Common myeloid progenitor, CD34-positive (primary cell): ENCODE measurements at regions of chr11 and their contacts with region 1.

Region 1: GRCh38 chr11:3971756-3972404 is 116.4 kb downstream of the STIM1 start:
- DNase-seq: peak; percentile 34 to 70 (median 60)
- H3K4me3 ChIP-seq: no peak overlapping the region
- H3K27ac ChIP-seq: no peak overlapping the region
- H3K4me1 ChIP-seq: peaks cover 2 to 19% (median 10%) of the 10 kb centered on the region in 4 experiments
- H3K27me3 ChIP-seq: no peaks in the 10 kb centered on the region

Region 2: GRCh38 chr11:3929649-3930048 is 42.2 kb before region 1 on chr11:
- CTCF ChIA-PET with region 1: interaction called, 10 read pairs
- POLR2A ChIA-PET with region 1: no interaction called
- DNase-seq: no peak
- H3K4me3 ChIP-seq: no peak overlapping the region
- H3K27ac ChIP-seq: no peak overlapping the region
- H3K4me1 ChIP-seq: peaks cover 6 to 22% (median 10%) of the 10 kb centered on the region in 4 experiments
- H3K27me3 ChIP-seq: no peaks in the 10 kb centered on the region

Region 3: DNA sequence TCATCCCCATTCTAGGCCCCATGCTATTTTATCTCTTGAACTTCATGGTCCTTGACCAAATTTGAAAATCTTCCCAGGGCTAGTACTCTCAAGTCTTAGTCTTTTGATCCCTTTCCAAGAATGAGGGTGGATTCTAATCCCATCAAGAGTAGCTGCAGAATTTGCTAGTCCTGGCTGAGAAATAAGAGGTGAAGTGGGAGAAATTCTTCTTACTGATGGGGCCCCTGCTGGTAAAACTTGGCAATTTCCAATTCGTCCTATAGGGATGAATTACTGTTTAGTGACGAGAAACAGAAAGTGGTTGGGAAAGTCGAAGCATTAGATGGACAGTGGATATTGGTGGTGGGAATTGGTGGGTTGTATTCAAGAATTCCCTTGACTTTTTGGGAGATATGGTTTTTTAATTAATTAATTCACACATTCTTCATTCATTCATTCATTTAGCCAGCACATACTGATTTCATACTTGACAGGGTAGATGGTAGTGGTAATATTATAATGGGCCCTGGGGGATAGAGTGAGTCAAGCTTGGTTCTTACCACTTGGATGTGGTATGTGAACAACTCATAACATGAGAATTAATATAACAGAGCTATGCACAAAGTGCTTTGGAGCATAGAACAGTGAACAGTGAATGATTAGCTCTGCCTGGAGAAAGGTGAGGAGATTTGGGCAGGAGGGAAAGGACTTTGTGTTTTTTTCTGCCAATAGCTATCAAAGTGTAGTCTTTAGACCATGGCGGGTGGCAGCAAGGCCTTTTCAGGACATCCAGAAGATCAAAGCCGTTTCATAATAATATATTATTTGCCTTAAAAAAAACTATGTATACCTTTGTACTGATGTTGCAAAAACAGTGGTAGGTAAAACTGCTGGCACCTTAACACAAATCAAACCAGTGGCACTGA is 12.6 kb before region 1 on chr11:
- CTCF ChIA-PET with region 1: interaction called, 14 read pairs
- POLR2A ChIA-PET with region 1: interaction called, 3 read pairs
- DNase-seq: peak in 1 of 3 donors; percentile 43
- H3K4me3 ChIP-seq: no peak overlapping the region
- H3K27ac ChIP-seq: no peak overlapping the region
- H3K4me1 ChIP-seq: peaks cover 0 to 18% (median 5%) of the 10 kb centered on the region in 4 experiments
- H3K27me3 ChIP-seq: no peaks in the 10 kb centered on the region